MCF 10A (cell line): ENCODE measurements at regions of chr20 and their contacts with region 1.

Region 1: DNA sequence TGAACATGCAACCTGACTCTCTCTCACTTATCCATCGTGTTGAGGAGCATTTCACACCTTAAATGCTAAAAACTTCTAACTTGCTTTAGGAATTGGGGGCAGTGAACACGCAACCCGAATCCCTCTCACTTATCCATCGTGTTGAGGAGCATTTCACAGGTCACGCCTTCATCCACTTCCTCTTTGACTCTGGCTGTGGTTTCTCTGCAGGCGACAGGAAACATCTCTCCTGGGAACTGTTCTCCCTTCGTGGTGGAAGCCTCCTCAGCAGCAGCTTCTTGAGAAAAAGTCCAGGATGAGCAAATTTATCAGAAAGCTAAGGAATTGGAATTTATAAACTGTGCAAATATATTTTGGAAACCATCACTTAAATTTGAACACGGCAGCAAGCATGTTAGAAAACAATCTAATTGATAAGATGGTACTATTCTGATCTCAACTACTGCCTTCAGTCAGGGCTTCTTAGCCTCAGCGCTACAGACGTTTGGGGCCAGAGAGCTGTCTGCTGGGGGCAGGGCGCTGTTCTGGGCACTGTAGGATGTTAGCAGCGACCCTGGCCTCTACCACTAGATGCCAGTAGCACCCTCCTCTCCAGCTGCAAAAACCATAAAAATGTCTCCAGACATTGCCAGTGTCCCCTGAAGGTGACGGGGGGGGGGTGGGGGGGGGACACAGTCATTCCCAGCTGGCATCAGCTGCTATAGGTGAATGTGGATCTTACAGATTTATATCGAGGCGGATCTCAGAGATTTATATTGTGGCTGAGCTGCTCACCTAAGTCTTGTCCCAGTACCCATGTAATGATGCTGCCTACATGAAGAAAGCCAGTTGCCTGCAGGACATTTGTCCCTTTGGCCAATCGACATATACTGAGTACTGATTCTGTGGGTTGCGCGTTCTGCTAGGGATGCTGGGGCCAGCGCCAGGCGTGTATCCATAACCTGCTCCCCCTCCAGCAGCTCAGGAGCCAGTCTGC is 26.2 kb downstream of the CTCFL start:
- DNase-seq: peak; percentile 37
- H3K4me3 Mint-ChIP-seq: no peak overlapping the region
- H3K27ac Mint-ChIP-seq: no peak overlapping the region
- H3K4me1 Mint-ChIP-seq: no peaks in the 10 kb centered on the region
- H3K27me3 Mint-ChIP-seq: peaks cover 66% of the 10 kb centered on the region
- CTCF ChIP-seq: peak; percentile 20

Region 2: DNA sequence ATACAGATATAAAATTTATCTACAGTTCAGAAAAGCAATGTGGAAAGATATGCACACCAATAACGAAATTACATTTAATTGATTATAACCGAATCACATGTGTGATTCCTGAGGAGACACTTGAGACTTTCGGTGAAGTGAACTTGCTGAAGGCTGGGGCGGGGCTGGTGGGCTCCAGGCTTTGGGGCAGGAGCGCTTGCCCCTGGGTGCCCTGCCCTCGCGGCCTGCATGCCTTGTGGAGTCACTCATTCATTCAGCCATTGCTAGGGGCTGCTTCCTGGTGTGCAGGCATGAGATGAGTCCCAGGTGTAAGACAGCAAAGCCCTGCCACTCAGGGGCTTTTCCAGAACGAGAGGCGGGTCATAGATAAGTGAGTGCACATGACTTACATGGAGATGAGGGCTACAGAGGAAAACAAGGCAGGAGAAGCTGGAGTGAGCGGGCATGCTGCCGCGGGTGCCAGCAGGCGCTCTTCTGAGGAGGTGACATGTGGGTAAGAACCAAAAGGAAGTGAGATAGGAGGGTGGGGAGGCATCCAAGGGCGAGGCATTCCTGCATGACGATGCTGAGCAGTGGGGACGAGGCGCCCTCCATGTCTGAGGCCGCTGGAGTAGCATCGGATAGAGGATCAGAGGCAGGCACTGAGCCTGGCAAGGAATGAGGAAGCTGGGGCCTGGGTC is 320.9 kb before region 1 on chr20:
- CTCF ChIA-PET with region 1: no interaction called
- POLR2A ChIA-PET with region 1: no interaction called
- intact Hi-C with region 1: no loop called
- DNase-seq: no peak
- H3K4me3 Mint-ChIP-seq: no peak overlapping the region
- H3K27ac Mint-ChIP-seq: no peak overlapping the region
- H3K4me1 Mint-ChIP-seq: peaks cover 7% of the 10 kb centered on the region
- H3K27me3 Mint-ChIP-seq: no peaks in the 10 kb centered on the region
- CTCF ChIP-seq: no peak

Region 3: DNA sequence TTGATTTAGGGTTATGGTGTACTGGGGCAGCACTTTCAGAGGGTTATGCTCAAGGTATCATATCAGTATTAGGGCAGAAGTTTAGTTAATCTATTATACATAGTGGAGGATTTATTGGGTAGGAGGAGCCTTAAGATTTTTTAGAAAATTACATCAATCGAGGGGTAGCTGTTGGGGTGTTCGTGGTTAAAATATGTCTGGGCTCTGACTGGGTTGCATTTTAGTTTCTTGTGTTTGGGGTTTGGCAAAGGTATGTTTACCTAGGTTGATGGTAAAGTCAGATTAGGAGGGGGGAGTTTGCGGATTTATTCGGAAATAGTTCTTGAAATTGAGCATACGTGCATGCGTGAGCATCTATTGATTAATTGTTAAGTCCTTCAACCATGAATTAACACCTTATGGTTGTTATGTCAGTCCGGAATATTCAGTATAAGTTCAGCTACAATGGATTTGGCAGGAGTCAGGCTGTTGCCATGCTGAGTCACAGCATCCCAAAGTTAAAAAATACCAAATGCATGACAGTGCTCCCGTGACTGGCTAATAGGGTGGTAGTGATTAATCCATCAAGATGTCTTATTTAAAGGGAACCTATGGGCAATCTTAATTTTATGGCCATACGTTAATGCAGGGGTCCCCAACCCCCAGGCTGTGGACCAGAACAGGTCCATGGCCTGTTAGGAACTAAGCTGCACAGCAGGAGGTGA is 137.3 kb before region 1 on chr20:
- CTCF ChIA-PET with region 1: interaction called, 10 read pairs
- POLR2A ChIA-PET with region 1: no interaction called
- intact Hi-C with region 1: no loop called
- DNase-seq: peak; percentile 60
- H3K4me3 Mint-ChIP-seq: no peak overlapping the region
- H3K27ac Mint-ChIP-seq: no peak overlapping the region
- H3K4me1 Mint-ChIP-seq: no peaks in the 10 kb centered on the region
- H3K27me3 Mint-ChIP-seq: no peaks in the 10 kb centered on the region
- CTCF ChIP-seq: no peak

Region 4: GRCh38 chr20:57388953-57389694 is 109.6 kb before region 1 on chr20:
- CTCF ChIA-PET with region 1: interaction called, 40 read pairs
- POLR2A ChIA-PET with region 1: interaction called, 3 read pairs
- intact Hi-C with region 1: no loop called
- DNase-seq: no peak
- H3K4me3 Mint-ChIP-seq: no peak overlapping the region
- H3K27ac Mint-ChIP-seq: no peak overlapping the region
- H3K4me1 Mint-ChIP-seq: no peaks in the 10 kb centered on the region
- H3K27me3 Mint-ChIP-seq: no peaks in the 10 kb centered on the region
- CTCF ChIP-seq: peak; percentile 25

Region 5: GRCh38 chr20:57514273-57514751 is 15.6 kb after region 1 on chr20:
- CTCF ChIA-PET with region 1: interaction called, 29 read pairs
- POLR2A ChIA-PET with region 1: no interaction called
- intact Hi-C with region 1: no loop called
- DNase-seq: peak; percentile 67
- H3K4me3 Mint-ChIP-seq: no peak overlapping the region
- H3K27ac Mint-ChIP-seq: no peak overlapping the region
- H3K4me1 Mint-ChIP-seq: no peaks in the 10 kb centered on the region
- H3K27me3 Mint-ChIP-seq: peaks cover 30% of the 10 kb centered on the region
- CTCF ChIP-seq: peak; percentile 79

Region 6: DNA sequence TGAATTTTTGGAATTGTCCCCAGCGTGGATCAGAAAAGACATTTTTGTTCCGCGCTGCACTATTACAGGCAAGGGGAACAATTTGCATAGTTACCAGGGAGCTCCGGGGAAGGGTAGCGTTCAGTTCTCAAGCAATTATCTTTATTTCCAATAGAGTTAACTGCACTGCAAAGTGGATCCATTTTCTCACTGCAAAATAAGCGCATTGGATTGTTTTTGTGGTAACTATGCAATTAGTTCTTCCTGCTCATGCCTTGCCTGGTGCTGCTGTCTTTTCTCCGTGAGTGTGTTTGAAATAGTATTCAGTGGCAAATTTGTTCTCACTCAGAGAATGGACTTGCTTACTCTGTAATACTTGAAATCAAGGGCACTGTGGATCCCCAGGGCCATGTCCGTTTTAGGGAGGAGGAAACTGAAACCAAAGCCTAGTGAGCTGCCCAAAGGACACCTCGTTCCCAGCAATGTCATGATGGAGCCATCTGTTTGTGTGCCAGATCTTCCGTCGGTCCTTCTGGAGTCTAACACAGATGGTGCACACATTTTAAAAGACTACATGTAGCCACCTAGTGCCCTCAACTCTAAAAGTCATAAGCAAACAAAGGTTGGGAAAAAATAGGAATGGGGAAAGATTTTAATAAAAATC is 54.8 kb after region 1 on chr20:
- CTCF ChIA-PET with region 1: no interaction called
- POLR2A ChIA-PET with region 1: no interaction called
- intact Hi-C with region 1: no loop called
- DNase-seq: no peak
- H3K4me3 Mint-ChIP-seq: no peak overlapping the region
- H3K27ac Mint-ChIP-seq: no peak overlapping the region
- H3K4me1 Mint-ChIP-seq: no peaks in the 10 kb centered on the region
- H3K27me3 Mint-ChIP-seq: peaks cover 99% of the 10 kb centered on the region
- CTCF ChIP-seq: no peak

Region 7: DNA sequence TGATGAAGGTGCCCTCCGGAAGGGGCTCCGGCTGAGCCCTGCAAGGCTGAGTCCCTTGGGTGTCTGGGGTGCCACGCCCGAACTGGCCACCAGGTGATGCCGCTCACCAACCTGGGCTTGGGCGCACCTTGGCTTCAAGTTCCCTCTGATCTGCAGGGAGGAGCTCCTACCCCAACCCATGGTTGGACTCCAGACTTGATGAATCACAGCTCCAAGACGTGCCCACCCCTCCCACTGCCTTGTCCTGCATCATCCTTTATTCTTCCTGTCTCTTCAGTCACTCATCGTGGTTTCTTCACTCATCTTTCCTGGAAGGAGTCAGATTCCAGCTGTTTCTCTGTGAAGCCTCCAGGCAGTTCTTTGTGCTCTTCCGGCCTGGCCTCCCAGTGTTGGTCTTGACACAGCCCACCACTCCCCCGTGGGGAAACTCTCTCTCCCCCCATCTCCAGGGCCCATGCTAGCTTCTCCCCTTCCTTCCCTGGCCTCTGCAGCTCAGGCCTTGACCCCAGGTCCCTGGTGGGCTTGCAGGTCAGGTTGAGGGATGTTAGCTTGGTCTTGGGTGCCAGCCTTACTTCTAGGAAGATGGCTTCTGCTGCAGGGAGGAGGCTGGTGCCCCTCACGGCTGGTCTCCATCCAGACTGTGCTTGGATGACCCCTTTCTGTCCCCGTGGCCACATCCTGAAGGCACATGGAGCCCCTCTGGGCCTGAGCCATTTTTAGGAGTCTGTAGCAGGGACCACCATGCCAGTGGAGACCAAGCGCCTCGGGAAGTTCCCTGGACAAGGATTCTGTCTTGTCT is 124.1 kb after region 1 on chr20:
- CTCF ChIA-PET with region 1: no interaction called
- POLR2A ChIA-PET with region 1: no interaction called
- intact Hi-C with region 1: no loop called
- DNase-seq: peak; percentile 75
- H3K4me3 Mint-ChIP-seq: no peak overlapping the region
- H3K27ac Mint-ChIP-seq: no peak overlapping the region
- H3K4me1 Mint-ChIP-seq: peaks cover 6% of the 10 kb centered on the region
- H3K27me3 Mint-ChIP-seq: no peaks in the 10 kb centered on the region
- CTCF ChIP-seq: peak; percentile 84